Posterior vena cava (tissue), 2 donors: ENCODE measurements at regions of chr4 and their contacts with region 1.

Region 1: DNA sequence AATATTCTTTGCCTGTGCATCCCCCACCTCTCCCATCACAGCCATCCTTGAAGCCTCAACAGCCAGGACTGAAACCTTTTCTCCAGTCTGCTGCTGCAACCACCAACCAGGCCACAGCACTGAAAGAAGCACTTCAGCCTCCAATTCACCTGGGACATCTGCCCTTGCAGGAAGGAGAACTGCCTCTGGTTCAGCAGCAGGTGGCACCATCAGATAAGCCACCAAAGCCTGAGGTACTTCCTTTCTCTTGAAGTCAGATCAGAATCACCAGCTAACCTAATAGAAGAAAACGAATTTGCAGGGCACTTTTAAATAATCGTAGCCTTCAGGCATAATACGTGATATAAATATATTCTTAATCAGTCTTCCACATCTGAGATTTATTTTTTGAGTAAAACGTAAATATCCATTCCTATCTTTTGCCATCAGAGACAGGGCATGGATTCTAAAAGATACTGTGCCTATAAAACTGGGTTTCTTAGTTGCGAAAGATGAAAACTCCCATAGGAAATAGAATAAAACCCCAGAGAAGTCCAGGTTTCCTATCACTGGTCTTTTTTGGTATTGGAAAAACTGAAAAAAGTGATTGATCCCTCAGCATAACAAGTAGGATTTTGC is 9.5 kb downstream of the AMBN start:
- DNase-seq: no peak

Region 2: DNA sequence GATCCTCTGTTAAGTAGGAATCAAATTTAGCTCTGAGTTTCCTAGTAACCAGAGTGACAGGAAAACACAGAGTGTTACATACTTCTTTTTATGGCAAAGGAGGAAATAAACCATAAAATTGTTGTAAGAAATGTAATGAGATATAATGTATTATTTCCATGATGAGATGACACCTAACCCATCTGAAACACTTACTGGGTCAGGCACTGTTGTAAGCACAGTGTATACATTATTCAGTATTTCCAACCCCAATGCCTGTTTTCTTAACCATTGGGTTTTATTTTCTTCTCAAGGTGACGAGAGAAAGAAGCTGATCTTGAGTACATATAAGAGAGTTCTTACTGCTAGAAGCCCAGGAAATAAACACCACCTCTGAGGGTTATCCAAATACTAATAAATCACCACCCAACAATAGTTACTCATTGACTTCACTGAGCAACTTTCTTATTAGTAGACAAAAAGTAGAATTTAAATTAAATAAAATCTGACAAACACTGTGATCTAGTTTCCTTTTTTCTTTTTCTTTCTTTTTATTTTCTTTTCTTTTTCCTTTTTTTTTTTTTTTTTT is 22.8 kb after region 1 on chr4:
- intact Hi-C with region 1: no loop called
- DNase-seq: no peak

Region 3: DNA sequence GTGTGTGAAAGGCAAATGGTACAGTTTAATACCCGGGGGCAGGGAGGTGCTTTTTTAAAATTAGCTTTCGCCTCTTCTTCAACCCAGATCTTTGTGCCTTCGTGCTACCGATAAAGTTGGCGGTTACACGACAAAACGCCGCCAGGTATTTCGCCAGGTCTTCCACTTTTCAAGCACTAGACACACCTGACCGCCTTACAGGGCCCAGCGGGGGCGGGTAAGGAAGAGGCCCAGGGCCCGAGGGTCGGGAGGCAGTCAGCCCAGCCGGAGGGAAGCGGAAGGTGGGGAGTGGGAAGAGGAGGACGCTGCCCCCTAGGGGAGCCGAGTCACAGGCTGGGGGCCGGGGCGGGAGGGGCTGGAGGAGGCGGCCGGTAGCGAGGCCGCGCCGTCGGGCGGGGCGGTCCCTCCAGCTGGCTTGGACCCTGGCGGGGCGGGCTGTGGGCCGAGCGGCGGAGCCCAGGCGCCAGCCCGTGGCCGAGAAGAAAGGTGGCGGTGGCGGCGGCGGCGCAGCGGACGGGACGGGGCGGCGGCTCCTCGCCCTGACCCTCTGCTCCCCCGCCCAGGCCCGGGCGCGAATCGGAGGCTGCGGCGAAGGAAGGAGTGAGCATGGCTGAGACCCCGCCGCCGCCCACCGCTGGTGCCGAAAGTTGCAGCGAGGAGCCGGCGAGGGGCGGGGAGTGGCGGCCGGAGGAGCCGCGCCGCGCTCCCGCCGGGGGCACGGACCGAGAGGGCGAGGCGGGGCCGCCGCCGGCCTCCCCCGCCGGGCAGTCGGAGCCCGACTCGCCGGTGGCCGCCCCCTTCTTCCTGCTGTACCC is 103.0 kb after region 1 on chr4:
- intact Hi-C with region 1: loop called in 1 of 2 experiments (anchors 10 kb)
- DNase-seq: peak; percentile 93